A673 (cell line): ENCODE measurements at regions of chr5 and their contacts with region 1.

Region 1: GRCh38 chr5:37598733-37599132 is 219.6 kb downstream of the WDR70 start:
- DNase-seq: no peak
- H3K4me3 ChIP-seq: no peak overlapping the region
- H3K27ac ChIP-seq: no peak overlapping the region
- H3K4me1 ChIP-seq: no peaks in the 10 kb centered on the region
- H3K27me3 ChIP-seq: no peaks in the 10 kb centered on the region
- CTCF ChIP-seq: no peak

Region 2: GRCh38 chr5:37478121-37478894 is 120.4 kb before region 1 on chr5:
- CTCF ChIA-PET with region 1: no interaction called
- POLR2A ChIA-PET with region 1: no interaction called
- intact Hi-C with region 1: no loop called
- DNase-seq: no peak
- H3K4me3 ChIP-seq: no peak overlapping the region
- H3K27ac ChIP-seq: no peak overlapping the region
- H3K4me1 ChIP-seq: no peaks in the 10 kb centered on the region
- H3K27me3 ChIP-seq: no peaks in the 10 kb centered on the region
- CTCF ChIP-seq: no peak

Region 3: DNA sequence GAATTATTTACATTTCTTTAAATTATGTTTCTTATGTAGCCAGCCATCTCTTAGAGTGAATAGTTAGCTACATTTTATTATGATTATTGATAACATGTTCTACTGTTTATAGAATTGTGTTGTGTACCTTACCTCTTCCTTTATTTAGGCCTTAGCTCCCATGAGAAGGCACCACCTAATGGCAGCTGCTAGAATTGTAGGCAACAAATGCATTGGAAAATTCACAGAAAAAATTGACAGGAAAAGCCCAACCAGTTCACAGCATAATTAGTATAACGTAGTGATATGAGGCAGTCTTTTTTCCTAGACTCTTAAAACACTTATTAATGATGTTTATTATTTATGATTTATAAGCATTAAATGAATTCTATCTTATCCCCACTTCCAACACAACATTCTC is 43.8 kb before region 1 on chr5:
- CTCF ChIA-PET with region 1: no interaction called
- POLR2A ChIA-PET with region 1: interaction called, 14 read pairs
- intact Hi-C with region 1: no loop called
- DNase-seq: no peak
- H3K4me3 ChIP-seq: no peak overlapping the region
- H3K27ac ChIP-seq: peak overlapping the region; percentile 95
- H3K4me1 ChIP-seq: peaks cover 26% of the 10 kb centered on the region
- H3K27me3 ChIP-seq: no peaks in the 10 kb centered on the region
- CTCF ChIP-seq: peak; percentile 48